CD4-positive, alpha-beta T cell (primary cell): ENCODE measurements at regions of chr7 and their contacts with region 1.

Region 1: DNA sequence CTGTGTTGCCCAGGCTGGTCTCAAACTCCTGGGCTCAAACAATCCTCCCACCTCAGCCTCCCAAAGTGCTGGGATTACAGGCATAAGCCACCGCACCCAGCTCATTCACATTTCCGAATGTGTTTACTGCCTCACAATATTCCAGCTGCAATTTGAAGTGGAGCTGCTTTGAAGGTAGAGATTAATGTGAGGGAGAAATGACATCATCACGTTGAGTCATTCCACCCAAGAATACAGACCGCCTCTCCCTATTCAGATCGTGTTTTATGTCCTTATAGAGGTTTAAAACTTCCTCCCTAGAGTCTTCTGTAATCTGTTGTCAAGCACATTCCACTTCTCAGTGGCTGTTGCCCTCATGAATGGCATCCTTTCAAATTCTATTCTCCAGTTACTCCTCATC is 100.4 kb upstream of the PDGFA start:
- DNase-seq: no peak
- ATAC-seq: no peak
- H3K4me3 ChIP-seq: no peak overlapping the region
- H3K4me3 Mint-ChIP-seq: no peak overlapping the region
- H3K27ac ChIP-seq: no peak overlapping the region
- H3K27ac Mint-ChIP-seq: peak overlapping the region; percentile 97
- H3K4me1 ChIP-seq: peaks cover 50% of the 10 kb centered on the region
- H3K4me1 Mint-ChIP-seq: peaks cover 51% of the 10 kb centered on the region
- H3K27me3 ChIP-seq: no peaks in the 10 kb centered on the region
- H3K27me3 Mint-ChIP-seq: no peaks in the 10 kb centered on the region
- CTCF ChIP-seq: no peak

Region 2: GRCh38 chr7:362402-363096 is 257.5 kb before region 1 on chr7:
- CTCF ChIA-PET with region 1: no interaction called
- POLR2A ChIA-PET with region 1: interaction called, 3 read pairs
- intact Hi-C with region 1: loop called in 1 of 2 experiments (anchors 5 kb)
- DNase-seq: peak in 11 of 14 experiments; percentile 15 to 77 (median 59)
- ATAC-seq: peak; percentile 59
- H3K4me3 ChIP-seq: peak overlapping the region; percentile 28
- H3K4me3 Mint-ChIP-seq: peak overlapping the region; percentile 80
- H3K27ac ChIP-seq: peak overlapping the region; percentile 49 to 75
- H3K27ac Mint-ChIP-seq: peak overlapping the region; percentile 94
- H3K4me1 ChIP-seq: peaks cover 82% of the 10 kb centered on the region
- H3K4me1 Mint-ChIP-seq: peaks cover 75% of the 10 kb centered on the region
- H3K27me3 ChIP-seq: no peaks in the 10 kb centered on the region
- H3K27me3 Mint-ChIP-seq: no peaks in the 10 kb centered on the region
- CTCF ChIP-seq: no peak

Region 3: DNA sequence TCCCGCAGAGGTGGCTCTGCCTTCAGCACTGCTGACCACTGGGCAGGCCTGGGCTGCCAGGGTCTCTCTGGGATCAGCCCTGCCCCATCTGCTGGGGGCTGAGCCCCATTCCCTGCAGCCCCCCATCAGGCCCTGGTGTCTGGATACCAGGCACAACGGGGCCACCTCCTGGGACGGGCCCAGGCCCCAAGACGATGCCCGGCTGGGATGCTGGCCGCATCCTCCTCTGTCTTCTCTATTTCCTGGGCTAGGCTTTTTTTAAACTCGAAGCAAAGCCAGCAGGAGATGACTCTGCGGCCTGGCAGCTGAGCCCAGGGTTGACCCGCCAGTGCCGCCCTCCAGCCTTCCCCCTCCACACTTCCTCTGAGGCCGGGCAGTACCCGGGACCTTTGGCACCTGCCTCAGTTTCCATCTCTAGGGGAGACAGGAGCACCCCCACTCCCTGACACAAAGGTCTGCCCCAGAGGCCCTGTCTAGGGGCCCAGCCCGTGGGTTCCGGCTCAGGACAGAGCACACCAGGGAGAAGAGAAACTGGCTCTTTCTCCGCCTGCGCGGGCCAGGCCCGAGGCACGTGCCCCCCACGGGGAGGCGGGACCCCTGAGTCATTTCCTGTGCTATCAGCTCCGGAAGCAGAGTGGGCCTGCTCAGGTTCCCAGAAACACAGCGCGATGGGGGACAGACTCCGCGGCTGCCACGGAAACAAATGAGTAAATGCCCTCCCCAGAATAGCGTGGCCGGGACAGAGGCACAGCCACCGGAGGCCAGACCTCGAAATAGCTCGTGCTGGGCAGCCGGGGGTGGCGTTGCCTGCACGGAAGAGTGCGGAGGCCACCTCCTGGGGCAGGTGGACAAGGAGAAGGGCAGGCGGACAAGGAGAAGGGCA is 15.8 kb before region 1 on chr7:
- CTCF ChIA-PET with region 1: interaction called, 5 read pairs
- POLR2A ChIA-PET with region 1: interaction called, 61 read pairs
- intact Hi-C with region 1: loop called (anchors 1 to 2 kb)
- DNase-seq: peak; percentile 80 to 97 (median 91)
- ATAC-seq: peak; percentile 84
- H3K4me3 ChIP-seq: peak overlapping the region; percentile 58
- H3K4me3 Mint-ChIP-seq: peak overlapping the region; percentile 88
- H3K27ac ChIP-seq: peak overlapping the region; percentile 96 to 97
- H3K27ac Mint-ChIP-seq: peak overlapping the region; percentile 98
- H3K4me1 ChIP-seq: peaks cover 83% of the 10 kb centered on the region
- H3K4me1 Mint-ChIP-seq: peaks cover 62% of the 10 kb centered on the region
- H3K27me3 ChIP-seq: no peaks in the 10 kb centered on the region
- H3K27me3 Mint-ChIP-seq: no peaks in the 10 kb centered on the region
- CTCF ChIP-seq: no peak

Region 4: GRCh38 chr7:668139-668931 is 48.3 kb after region 1 on chr7:
- CTCF ChIA-PET with region 1: no interaction called
- POLR2A ChIA-PET with region 1: interaction called, 10 read pairs
- intact Hi-C with region 1: no loop called
- DNase-seq: peak in 2 of 14 experiments; percentile 10 to 12
- ATAC-seq: peak; percentile 52
- H3K4me3 ChIP-seq: peak overlapping the region; percentile 10
- H3K4me3 Mint-ChIP-seq: no peak overlapping the region
- H3K27ac ChIP-seq: peak overlapping the region in 1 of 2 donors; percentile 40
- H3K27ac Mint-ChIP-seq: no peak overlapping the region
- H3K4me1 ChIP-seq: peaks cover 14% of the 10 kb centered on the region
- H3K4me1 Mint-ChIP-seq: peaks cover 7% of the 10 kb centered on the region
- H3K27me3 ChIP-seq: no peaks in the 10 kb centered on the region
- H3K27me3 Mint-ChIP-seq: no peaks in the 10 kb centered on the region
- CTCF ChIP-seq: no peak

Region 5: GRCh38 chr7:1040790-1041189 is 420.7 kb after region 1 on chr7:
- CTCF ChIA-PET with region 1: no interaction called
- POLR2A ChIA-PET with region 1: no interaction called
- intact Hi-C with region 1: no loop called
- DNase-seq: no peak
- ATAC-seq: no peak
- H3K4me3 ChIP-seq: no peak overlapping the region
- H3K4me3 Mint-ChIP-seq: no peak overlapping the region
- H3K27ac ChIP-seq: no peak overlapping the region
- H3K27ac Mint-ChIP-seq: no peak overlapping the region
- H3K4me1 ChIP-seq: peaks cover 31% of the 10 kb centered on the region
- H3K4me1 Mint-ChIP-seq: peaks cover 23% of the 10 kb centered on the region
- H3K27me3 ChIP-seq: no peaks in the 10 kb centered on the region
- H3K27me3 Mint-ChIP-seq: no peaks in the 10 kb centered on the region
- CTCF ChIP-seq: no peak

Region 6: GRCh38 chr7:2384354-2385243 is 1764.5 kb after region 1 on chr7:
- CTCF ChIA-PET with region 1: no interaction called
- POLR2A ChIA-PET with region 1: no interaction called
- intact Hi-C with region 1: no loop called
- DNase-seq: peak in 1 of 14 experiments; percentile 21
- ATAC-seq: no peak
- H3K4me3 ChIP-seq: no peak overlapping the region
- H3K4me3 Mint-ChIP-seq: no peak overlapping the region
- H3K27ac ChIP-seq: no peak overlapping the region
- H3K27ac Mint-ChIP-seq: no peak overlapping the region
- H3K4me1 ChIP-seq: no peaks in the 10 kb centered on the region
- H3K4me1 Mint-ChIP-seq: no peaks in the 10 kb centered on the region
- H3K27me3 ChIP-seq: no peaks in the 10 kb centered on the region
- H3K27me3 Mint-ChIP-seq: no peaks in the 10 kb centered on the region
- CTCF ChIP-seq: no peak